HEK293 (cell line): ENCODE measurements at regions of chr1 and their contacts with region 1.

Region 1: DNA sequence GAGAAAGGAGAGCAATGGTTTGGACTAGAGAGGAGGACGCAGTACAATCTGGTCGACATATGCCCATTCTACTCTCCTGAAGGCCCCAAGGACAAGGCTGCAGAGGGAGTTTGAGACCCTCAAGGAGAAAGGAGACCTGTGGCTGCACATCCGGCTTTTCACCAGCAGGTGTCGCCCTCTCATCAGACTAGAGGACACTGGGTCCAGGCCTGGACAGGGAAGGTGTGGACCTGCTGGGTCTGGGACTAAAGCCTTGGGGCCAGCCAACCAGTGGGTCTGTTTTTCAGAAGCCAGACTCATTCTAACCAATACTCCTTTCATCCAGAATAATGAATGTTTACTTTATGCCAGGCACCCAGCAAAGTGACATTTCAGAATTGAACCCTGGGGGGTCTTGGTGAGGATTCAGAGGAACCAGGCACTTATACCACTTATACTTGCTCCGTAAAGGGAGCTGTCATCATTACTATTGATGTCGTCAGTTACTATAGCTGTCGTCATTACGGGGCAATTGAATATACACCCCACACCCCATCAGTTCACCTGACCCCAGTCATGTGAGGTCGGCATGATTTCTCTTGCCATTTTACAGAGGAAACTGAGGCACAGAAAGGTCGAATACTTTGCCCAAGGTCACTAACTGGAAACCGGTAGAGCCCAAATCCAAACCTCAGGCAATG is 5.1 kb downstream of the SRARP start:
- H3K4me3 ChIP-seq: no peak overlapping the region
- H3K27ac ChIP-seq: no peak overlapping the region
- H3K4me1 ChIP-seq: no peaks in the 10 kb centered on the region
- CTCF ChIP-seq: peak; percentile 84

Region 2: DNA sequence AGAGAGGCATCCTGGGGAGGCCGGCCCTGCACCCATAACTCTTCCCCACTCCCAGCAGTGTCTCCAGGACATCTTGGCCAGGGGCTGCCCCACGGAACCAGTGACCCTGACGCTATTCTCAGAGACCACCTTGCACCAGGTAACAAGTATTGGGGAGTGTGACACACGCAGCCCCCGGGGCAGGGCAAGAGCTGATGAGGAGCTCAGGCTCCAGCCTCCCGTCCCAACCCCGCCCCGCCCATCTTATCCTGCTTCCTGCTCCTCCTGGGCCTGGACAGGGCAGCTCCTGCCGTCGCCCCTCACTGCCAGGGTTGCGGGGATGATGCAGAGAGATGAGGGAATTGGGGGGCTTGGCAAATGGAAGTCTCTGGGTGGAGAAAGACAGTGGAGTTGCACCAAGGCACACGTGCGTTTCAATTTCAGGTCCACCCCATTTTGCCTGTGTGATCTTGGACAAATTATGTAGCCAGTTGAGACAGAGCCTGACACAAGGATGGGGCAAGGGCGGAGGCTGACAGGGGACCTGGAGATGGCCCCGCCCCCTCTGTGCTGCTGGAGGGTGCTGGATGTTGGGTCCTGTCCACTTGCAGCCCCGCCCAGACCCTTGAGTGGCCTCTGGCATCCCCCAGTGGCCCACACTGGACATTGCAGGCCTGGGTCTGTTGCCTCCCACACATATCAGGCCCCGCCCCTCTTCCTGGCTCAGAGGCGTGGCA is 23.4 kb after region 1 on chr1:
- CTCF ChIA-PET with region 1: interaction called, 14 read pairs
- POLR2A ChIA-PET with region 1: no interaction called
- H3K4me3 ChIP-seq: no peak overlapping the region
- H3K27ac ChIP-seq: no peak overlapping the region
- H3K4me1 ChIP-seq: no peaks in the 10 kb centered on the region
- CTCF ChIP-seq: peak; percentile 79; the same call in 1 of the 2 replicates

Region 3: GRCh38 chr1:16055613-16056520 is 46.7 kb after region 1 on chr1:
- CTCF ChIA-PET with region 1: interaction called, 47 read pairs
- POLR2A ChIA-PET with region 1: no interaction called
- H3K4me3 ChIP-seq: no peak overlapping the region
- H3K27ac ChIP-seq: no peak overlapping the region
- H3K4me1 ChIP-seq: no peaks in the 10 kb centered on the region
- CTCF ChIP-seq: peak; percentile 90